Caco-2 (cell line): ENCODE measurements at regions of chr3 and their contacts with region 1.

Region 1: GRCh38 chr3:134485718-134486576 is at the starts of genes ANAPC13 and CEP63:
- DNase-seq: peak; percentile 95 to 98
- H3K4me3 ChIP-seq: peak within 1 kb of the TSS; percentile 72
- H3K4me3 Mint-ChIP-seq: peak within 1 kb of the TSS; percentile 71
- H3K27ac Mint-ChIP-seq: peak within 1 kb of the TSS; percentile 51
- H3K4me1 ChIP-seq: no peaks in the 10 kb centered on the region
- H3K4me1 Mint-ChIP-seq: peaks cover 10% of the 10 kb centered on the region
- H3K27me3 ChIP-seq: no peaks in the 10 kb centered on the region
- H3K27me3 Mint-ChIP-seq: no peaks in the 10 kb centered on the region
- CTCF ChIP-seq: no peak
- total RNA-seq, gene ANAPC13: 47.6 and 57.0 TPM in 2 replicates
- total RNA-seq, gene CEP63: 21.3 and 21.9 TPM in 2 replicates

Region 2: DNA sequence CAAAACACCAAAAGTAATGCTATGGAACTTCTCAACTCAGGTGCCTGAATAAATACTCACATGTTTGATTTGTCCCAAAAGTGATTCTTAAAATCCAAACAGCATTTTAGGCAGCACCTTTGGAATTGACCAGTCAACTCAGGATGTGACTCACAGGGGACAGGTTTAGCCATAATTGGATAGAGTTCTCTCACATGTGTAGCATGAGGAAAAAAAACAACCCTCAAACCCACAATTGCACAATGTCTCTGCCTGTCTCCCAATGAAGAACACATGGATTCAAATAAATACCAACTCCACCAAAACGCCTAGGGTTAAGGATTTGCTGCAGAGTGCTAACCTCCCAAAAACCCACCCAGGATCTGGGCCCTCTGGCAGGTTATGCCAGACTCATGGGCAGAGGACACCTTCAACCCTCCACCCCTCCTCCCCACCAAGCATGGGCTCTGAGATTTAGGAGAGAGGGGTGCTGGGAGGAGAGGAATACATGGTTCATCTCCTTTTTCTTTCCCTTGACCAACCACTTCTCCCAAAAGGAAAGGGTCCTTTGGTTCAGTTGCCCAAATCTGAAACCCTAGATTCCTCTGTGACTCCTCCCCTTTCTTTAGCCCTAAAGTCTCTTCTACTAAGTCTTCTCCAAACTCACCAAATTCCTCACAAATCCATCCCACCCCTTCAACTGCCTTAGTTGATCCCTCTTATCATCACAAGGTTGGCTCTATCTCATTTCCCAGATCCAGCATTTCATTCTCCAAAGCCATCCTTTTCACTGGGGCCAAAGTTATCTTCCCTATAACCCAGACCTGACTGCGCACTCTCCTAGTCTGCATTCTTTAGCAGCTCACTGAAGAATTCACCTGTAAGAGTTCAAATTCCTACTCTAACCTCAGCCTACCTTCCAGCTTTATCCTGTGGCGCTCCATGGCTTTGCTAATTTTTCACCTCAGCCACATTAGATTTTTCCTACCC is 243.0 kb before region 1 on chr3:
- CTCF ChIA-PET with region 1: no interaction called
- POLR2A ChIA-PET with region 1: interaction called, 3 read pairs
- intact Hi-C with region 1: loop called (anchors 5 kb)
- DNase-seq: peak; percentile 78
- H3K4me3 ChIP-seq: no peak overlapping the region
- H3K4me3 Mint-ChIP-seq: peak overlapping the region; percentile 52
- H3K27ac Mint-ChIP-seq: peak overlapping the region; percentile 56
- H3K4me1 ChIP-seq: peaks cover 56% of the 10 kb centered on the region
- H3K4me1 Mint-ChIP-seq: peaks cover 61% of the 10 kb centered on the region
- H3K27me3 ChIP-seq: no peaks in the 10 kb centered on the region
- H3K27me3 Mint-ChIP-seq: no peaks in the 10 kb centered on the region
- CTCF ChIP-seq: no peak